ENCODE measurements at regions of chr20 and their contacts with region 1.

Region 1: GRCh38 chr20:3911956-3912355 is 22.8 kb downstream of the PANK2 start:
- DNase-seq: peak; percentile 8
- H3K4me3 Mint-ChIP-seq: no peak overlapping the region
- H3K27ac Mint-ChIP-seq: peak overlapping the region; percentile 9
- H3K4me1 Mint-ChIP-seq: peaks cover 52% of the 10 kb centered on the region
- H3K27me3 Mint-ChIP-seq: no peaks in the 10 kb centered on the region

Region 2: GRCh38 chr20:3658716-3659491 is 253.1 kb before region 1 on chr20:
- CTCF ChIA-PET with region 1: no interaction called
- POLR2A ChIA-PET with region 1: no interaction called
- intact Hi-C with region 1: no loop called
- DNase-seq: peak; percentile 61
- H3K4me3 Mint-ChIP-seq: no peak overlapping the region
- H3K27ac Mint-ChIP-seq: no peak overlapping the region
- H3K4me1 Mint-ChIP-seq: peaks cover 9% of the 10 kb centered on the region
- H3K27me3 Mint-ChIP-seq: peaks cover 31% of the 10 kb centered on the region

Region 3: DNA sequence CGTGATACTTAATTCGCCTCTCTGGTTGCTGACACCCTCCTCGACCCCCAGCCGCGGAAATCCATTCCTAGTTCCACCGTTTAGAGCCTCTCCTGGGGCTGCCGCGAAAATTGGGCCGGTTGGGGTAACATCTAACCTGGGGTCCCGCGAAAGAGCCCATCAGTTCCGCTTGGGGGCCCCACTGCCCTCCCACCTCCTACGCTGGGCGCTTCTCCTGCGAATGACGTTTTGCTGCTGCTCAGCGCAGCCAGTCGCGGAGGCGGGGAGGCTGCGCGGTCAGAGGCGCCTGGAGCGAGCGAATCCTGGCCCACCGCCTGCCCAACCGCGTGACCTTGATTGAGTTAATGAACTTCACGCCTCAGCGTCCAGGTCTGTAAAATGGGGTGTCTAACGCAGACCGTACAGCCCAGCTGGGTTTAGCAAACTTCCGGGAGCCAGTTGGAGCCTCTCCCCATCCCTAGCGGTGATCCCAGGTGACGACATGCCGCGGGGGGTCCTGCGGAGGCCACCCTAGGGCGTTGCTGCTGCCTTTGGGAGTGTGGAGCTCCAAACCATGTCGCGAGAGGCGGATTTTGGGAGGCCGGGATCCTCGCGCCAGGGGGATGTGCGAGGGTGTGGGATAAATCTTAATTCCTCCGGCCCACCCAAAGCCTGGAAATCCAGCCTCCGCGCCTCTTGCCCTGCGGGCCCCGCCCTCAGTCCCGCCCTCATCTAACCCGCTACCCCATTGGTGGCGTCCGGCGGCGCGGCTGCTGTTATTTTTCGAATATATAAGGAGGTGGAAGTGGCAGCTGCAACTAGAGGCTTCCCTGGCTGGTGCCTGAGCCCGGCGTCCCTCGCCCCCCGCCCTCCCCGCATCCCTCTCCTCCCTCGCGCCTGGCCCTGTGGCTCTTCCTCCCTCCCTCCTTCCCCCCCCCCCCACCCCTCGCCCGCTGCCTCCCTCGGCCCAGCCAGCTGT is 116.2 kb before region 1 on chr20 and contains the start of gene CDC25B:
- CTCF ChIA-PET with region 1: no interaction called
- POLR2A ChIA-PET with region 1: no interaction called
- intact Hi-C with region 1: loop called (anchors 5 kb)
- DNase-seq: peak; percentile 95
- H3K4me3 Mint-ChIP-seq: peak within 1 kb of the TSS; percentile 95
- H3K27ac Mint-ChIP-seq: peak within 1 kb of the TSS; percentile 98
- H3K4me1 Mint-ChIP-seq: peaks cover 36% of the 10 kb centered on the region
- H3K27me3 Mint-ChIP-seq: no peaks in the 10 kb centered on the region
- total RNA-seq, gene CDC25B: 120 to 128 TPM

Region 4: DNA sequence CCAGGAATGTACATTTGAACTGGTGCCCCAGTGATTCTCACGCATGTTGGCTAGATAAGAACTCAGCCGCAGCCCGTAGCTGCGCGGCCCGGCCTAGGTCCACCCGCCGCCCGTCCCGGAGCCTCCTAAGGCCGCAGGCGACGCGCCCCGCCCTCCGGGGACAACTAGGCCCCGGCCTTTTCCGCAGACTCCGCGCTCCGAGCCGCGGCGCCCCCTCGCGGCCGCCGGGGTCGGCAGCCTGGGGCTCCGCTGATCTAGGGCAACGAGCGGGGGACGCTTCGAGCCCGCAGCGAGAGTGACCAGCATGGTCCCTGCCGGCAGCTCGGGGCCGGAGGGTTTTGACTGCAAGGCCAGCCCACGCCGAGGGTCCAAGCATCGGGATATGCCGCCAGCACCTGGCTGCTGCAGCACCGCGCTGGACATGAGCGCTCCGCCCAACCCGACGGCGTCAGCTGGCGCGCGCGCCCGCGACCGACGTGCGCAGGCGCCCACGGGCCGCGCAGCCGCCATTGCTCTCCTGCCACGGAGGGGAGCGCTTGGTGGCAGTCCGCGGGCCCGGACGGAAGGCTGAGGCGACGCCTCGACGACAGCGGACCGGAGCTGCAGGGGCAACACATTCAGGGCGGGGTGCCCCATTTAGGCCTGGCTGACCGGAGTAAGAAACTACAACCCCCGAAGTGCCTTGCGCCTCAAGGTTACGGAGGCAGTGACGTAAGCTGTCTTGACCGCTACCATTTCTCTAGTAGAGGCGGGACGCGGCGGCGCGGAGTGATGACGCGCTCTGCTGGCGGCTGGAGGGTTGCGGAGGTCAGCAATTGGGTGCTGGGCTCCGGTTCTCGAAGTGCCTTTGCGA is 91.7 kb before region 1 on chr20 and contains the start of gene AP5S1:
- CTCF ChIA-PET with region 1: no interaction called
- POLR2A ChIA-PET with region 1: no interaction called
- intact Hi-C with region 1: loop called (anchors 1 kb)
- DNase-seq: peak; percentile 96
- H3K4me3 Mint-ChIP-seq: peak within 1 kb of the TSS; percentile 81
- H3K27ac Mint-ChIP-seq: peak within 1 kb of the TSS; percentile 93
- H3K4me1 Mint-ChIP-seq: peaks cover 36% of the 10 kb centered on the region
- H3K27me3 Mint-ChIP-seq: no peaks in the 10 kb centered on the region
- total RNA-seq, gene AP5S1: 9.1 to 10.0 TPM

Region 5: GRCh38 chr20:3888622-3889488 is 23.1 kb before region 1 on chr20 and contains the start of gene PANK2:
- CTCF ChIA-PET with region 1: interaction called, 3 read pairs
- POLR2A ChIA-PET with region 1: interaction called, 3 read pairs
- intact Hi-C with region 1: loop called (anchors 1 kb)
- DNase-seq: peak; percentile 99
- H3K4me3 Mint-ChIP-seq: peak within 1 kb of the TSS; percentile 92
- H3K27ac Mint-ChIP-seq: peak within 1 kb of the TSS; percentile 97
- H3K4me1 Mint-ChIP-seq: peaks cover 40% of the 10 kb centered on the region
- H3K27me3 Mint-ChIP-seq: no peaks in the 10 kb centered on the region
- total RNA-seq, gene PANK2: 49.3 to 52.5 TPM

Region 6: GRCh38 chr20:3980260-3981131 is 68.5 kb after region 1 on chr20:
- CTCF ChIA-PET with region 1: no interaction called
- POLR2A ChIA-PET with region 1: no interaction called
- intact Hi-C with region 1: loop called (anchors 1 kb)
- DNase-seq: peak; percentile 70
- H3K4me3 Mint-ChIP-seq: peak overlapping the region; percentile 63
- H3K27ac Mint-ChIP-seq: peak overlapping the region; percentile 87
- H3K4me1 Mint-ChIP-seq: peaks cover 19% of the 10 kb centered on the region
- H3K27me3 Mint-ChIP-seq: no peaks in the 10 kb centered on the region

Region 7: DNA sequence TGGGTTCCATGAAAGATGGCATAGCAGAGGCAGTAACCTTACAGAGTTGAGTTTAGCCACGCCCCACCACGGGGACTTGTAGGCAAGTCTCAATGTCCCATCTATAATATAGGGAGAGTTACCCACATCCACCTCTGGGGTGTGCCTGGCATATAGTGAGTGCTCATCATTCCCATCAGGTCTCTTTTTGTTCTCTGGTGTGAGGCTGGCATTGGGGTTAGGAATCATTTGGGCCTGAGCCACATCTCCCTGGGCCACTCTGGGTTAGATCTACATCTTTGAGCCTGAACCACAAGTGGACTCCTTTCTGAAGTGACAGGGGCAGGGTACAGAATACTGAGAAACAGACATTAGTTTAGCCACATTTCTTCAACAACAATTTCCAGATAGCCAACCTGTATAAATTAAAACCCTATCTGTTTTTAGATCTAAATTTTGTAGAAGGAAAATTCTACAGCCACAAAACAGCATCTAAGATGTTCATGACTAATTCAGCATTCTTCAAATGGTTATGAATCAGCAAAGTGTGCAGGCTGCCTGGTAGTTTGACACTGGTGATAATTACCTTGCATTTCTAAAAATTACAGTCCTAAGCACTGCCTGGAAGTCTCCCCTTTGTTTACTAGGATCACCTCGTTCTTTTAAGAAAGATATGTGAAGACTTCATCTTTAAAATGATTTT is 83.3 kb after region 1 on chr20:
- CTCF ChIA-PET with region 1: no interaction called
- POLR2A ChIA-PET with region 1: interaction called, 3 read pairs
- intact Hi-C with region 1: loop called (anchors 1 kb)
- DNase-seq: peak; percentile 50
- H3K4me3 Mint-ChIP-seq: peak overlapping the region; percentile 42
- H3K27ac Mint-ChIP-seq: peak overlapping the region; percentile 84
- H3K4me1 Mint-ChIP-seq: peaks cover 51% of the 10 kb centered on the region
- H3K27me3 Mint-ChIP-seq: no peaks in the 10 kb centered on the region

Region 8: DNA sequence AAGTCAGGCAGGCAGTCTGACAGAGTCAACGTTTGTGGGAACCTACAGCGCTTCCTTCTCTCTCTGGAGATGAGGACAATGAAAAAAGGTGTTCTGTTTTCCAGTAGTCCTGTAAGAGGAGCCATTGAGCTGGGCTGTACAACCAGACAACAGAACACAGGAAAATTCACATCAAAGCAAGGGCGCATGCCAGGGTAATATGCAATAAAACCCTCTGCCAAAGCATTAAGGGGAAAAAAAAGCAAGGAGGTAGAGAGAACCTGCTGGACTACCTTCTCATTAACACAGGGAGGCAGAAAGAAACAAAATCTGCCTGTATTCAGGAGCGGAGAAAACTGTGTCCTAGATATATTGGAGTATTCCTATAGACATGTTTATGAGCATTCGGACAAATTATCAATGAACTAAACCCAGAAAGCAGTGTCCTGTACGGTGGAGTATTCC is 102.1 kb after region 1 on chr20:
- CTCF ChIA-PET with region 1: interaction called, 3 read pairs
- POLR2A ChIA-PET with region 1: no interaction called
- intact Hi-C with region 1: loop called (anchors 5 kb)
- DNase-seq: peak; percentile 28
- H3K4me3 Mint-ChIP-seq: peak overlapping the region; percentile 86
- H3K27ac Mint-ChIP-seq: no peak overlapping the region
- H3K4me1 Mint-ChIP-seq: peaks cover 36% of the 10 kb centered on the region
- H3K27me3 Mint-ChIP-seq: no peaks in the 10 kb centered on the region